T-cell (primary cell): ENCODE measurements at regions of chr5 and their contacts with region 1.

Region 1: DNA sequence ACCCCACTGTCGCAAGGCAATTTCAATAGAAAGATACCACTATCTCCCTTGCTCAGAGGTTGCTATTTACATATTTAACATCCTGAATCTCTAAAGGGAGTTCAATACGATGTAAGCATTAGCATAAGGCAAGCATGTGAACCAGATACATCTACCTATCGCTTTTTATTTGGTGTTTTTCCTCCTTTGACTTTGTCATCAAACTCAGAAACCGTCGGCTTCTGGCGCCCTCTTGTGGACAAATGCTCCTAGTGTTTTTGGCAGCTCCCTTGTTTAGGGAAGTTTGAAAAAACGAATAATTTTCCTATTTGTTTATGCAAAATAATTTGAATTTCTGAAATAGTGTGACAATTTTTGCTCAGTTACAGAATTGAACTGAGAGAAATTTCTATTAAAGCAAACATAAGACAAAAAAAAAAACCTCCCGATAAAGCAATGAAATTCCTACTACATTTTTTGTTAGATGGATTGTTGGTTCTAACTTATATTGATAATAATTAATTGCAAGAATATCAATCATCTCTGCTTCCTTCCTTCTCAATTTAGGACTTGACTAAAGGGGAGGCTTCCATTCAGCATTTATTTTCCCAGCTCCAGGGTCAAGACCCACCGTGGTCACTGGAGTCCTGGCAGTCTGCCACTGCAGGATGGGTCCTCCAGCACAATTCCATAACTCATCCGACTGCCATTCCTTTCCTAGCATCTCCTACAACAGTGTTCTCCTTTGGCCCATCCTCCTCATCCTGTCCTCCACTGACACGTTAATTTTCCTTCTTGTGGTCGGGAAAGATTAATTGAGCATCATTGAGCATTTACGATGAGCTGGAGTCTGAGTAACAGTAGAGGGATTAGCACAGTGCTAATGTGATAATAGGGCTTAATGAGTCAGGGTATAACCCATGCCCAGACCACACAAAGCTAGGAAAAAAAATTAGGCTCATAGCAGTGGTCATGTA is 131.8 kb upstream of the CHD1 start:
- DNase-seq: peak; percentile 64 to 91 (median 82)
- ATAC-seq: peak; percentile 53 to 80 (median 76)
- H3K4me3 ChIP-seq: no peak overlapping the region
- H3K4me3 Mint-ChIP-seq: no peak overlapping the region
- H3K27ac ChIP-seq: no peak overlapping the region
- H3K27ac Mint-ChIP-seq: no peak overlapping the region
- H3K4me1 ChIP-seq: peaks cover 0 to 2% of the 10 kb centered on the region in 2 experiments
- H3K4me1 Mint-ChIP-seq: peaks cover 0 to 20% (median 5%) of the 10 kb centered on the region in 3 donors
- H3K27me3 ChIP-seq: peaks cover 0 to 2% of the 10 kb centered on the region in 2 experiments
- H3K27me3 Mint-ChIP-seq: peaks cover 0 to 3% of the 10 kb centered on the region in 2 donors

Region 2: GRCh38 chr5:98905857-98906690 is 154.5 kb before region 1 on chr5:
- CTCF ChIA-PET with region 1: interaction called, 11 to 71 read pairs
- POLR2A ChIA-PET with region 1: interaction called, 3 to 4 read pairs
- DNase-seq: peak in 1 of 35 experiments; percentile 73
- ATAC-seq: peak in 3 of 4 experiments; percentile 35 to 50 (median 46)
- H3K4me3 ChIP-seq: no peak overlapping the region
- H3K4me3 Mint-ChIP-seq: no peak overlapping the region
- H3K27ac ChIP-seq: no peak overlapping the region
- H3K27ac Mint-ChIP-seq: peak overlapping the region; percentile 68 to 86
- H3K4me1 ChIP-seq: peaks cover 3 to 15% of the 10 kb centered on the region in 2 experiments
- H3K4me1 Mint-ChIP-seq: peaks cover 55 to 64% (median 59%) of the 10 kb centered on the region in 3 donors
- H3K27me3 ChIP-seq: no peaks in the 10 kb centered on the region
- H3K27me3 Mint-ChIP-seq: no peaks in the 10 kb centered on the region

Region 3: DNA sequence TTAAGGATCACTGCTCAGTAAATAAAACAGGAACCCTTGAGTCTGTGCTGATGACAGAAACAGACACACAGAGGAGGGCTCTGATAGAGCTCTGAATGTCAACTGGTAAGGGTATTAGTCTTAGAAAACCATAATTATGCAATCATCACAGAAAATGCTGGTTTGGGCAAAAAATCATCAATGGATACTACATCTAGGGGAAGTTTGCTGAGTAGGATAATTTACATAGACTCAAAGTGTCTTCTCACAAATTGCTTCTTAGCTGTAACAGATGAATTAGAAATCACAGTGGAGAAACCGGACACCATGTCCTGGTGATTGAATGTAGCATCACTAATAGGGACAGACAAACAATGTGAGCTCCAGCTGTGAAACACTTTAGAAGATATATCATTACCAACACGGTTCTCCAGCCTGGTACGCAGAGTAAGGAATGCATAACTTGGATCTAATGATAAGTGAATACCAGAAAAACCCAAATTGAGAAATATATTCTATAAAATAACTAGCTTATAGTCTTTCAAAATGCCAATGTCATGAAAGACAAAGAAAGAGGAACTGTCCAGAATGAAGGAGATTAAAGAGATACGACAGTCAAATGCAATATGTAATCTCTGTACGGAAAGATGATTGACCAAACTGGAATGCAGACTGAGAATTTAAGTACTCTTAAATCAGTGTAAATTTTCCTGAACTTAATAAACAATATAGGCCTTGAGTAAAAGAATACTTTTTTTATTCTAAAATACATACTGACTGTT is 149.1 kb before region 1 on chr5:
- CTCF ChIA-PET with region 1: interaction called, 7 to 45 read pairs
- POLR2A ChIA-PET with region 1: interaction called, 3 to 4 read pairs
- DNase-seq: no peak
- ATAC-seq: peak in 1 of 4 experiments; percentile 23
- H3K4me3 ChIP-seq: no peak overlapping the region
- H3K4me3 Mint-ChIP-seq: no peak overlapping the region
- H3K27ac ChIP-seq: no peak overlapping the region
- H3K27ac Mint-ChIP-seq: peak overlapping the region; percentile 50 to 53
- H3K4me1 ChIP-seq: peaks cover 13 to 19% of the 10 kb centered on the region in 2 experiments
- H3K4me1 Mint-ChIP-seq: peaks cover 69 to 74% (median 70%) of the 10 kb centered on the region in 3 donors
- H3K27me3 ChIP-seq: no peaks in the 10 kb centered on the region
- H3K27me3 Mint-ChIP-seq: no peaks in the 10 kb centered on the region

Region 4: GRCh38 chr5:98928873-98929696 is 131.5 kb before region 1 on chr5 and contains the start of gene CHD1:
- CTCF ChIA-PET with region 1: interaction called, 4 to 13 read pairs
- POLR2A ChIA-PET with region 1: interaction called, 3 to 5 read pairs
- DNase-seq: peak; percentile 88 to 99 (median 97)
- ATAC-seq: peak; percentile 63 to 77 (median 74)
- H3K4me3 ChIP-seq: peak within 1 kb of the TSS; percentile 73 to 98
- H3K4me3 Mint-ChIP-seq: peak within 1 kb of the TSS; percentile 92 to 99 (median 97)
- H3K27ac ChIP-seq: peak within 1 kb of the TSS; percentile 100
- H3K27ac Mint-ChIP-seq: peak within 1 kb of the TSS; percentile 99 to 100
- H3K4me1 ChIP-seq: peaks cover 18 to 41% of the 10 kb centered on the region in 2 experiments
- H3K4me1 Mint-ChIP-seq: peaks cover 68 to 76% (median 71%) of the 10 kb centered on the region in 3 donors
- H3K27me3 ChIP-seq: no peaks in the 10 kb centered on the region
- H3K27me3 Mint-ChIP-seq: no peaks in the 10 kb centered on the region
- total RNA-seq, gene CHD1: 61.5 to 150 (median 64.9) TPM

Region 5: GRCh38 chr5:99122976-99123375 is 62.4 kb after region 1 on chr5:
- CTCF ChIA-PET with region 1: no interaction called
- POLR2A ChIA-PET with region 1: no interaction called
- DNase-seq: no peak
- ATAC-seq: no peak
- H3K4me3 ChIP-seq: no peak overlapping the region
- H3K4me3 Mint-ChIP-seq: no peak overlapping the region
- H3K27ac ChIP-seq: no peak overlapping the region
- H3K27ac Mint-ChIP-seq: no peak overlapping the region
- H3K4me1 ChIP-seq: no peaks in the 10 kb centered on the region
- H3K4me1 Mint-ChIP-seq: no peaks in the 10 kb centered on the region
- H3K27me3 ChIP-seq: no peaks in the 10 kb centered on the region
- H3K27me3 Mint-ChIP-seq: peaks cover 3 to 5% of the 10 kb centered on the region in 2 donors

Region 6: GRCh38 chr5:99398976-99399375 is 338.4 kb after region 1 on chr5:
- CTCF ChIA-PET with region 1: no interaction called
- POLR2A ChIA-PET with region 1: no interaction called
- DNase-seq: no peak
- ATAC-seq: no peak
- H3K4me3 ChIP-seq: no peak overlapping the region
- H3K4me3 Mint-ChIP-seq: no peak overlapping the region
- H3K27ac ChIP-seq: no peak overlapping the region
- H3K27ac Mint-ChIP-seq: no peak overlapping the region
- H3K4me1 ChIP-seq: no peaks in the 10 kb centered on the region
- H3K4me1 Mint-ChIP-seq: no peaks in the 10 kb centered on the region
- H3K27me3 ChIP-seq: no peaks in the 10 kb centered on the region
- H3K27me3 Mint-ChIP-seq: no peaks in the 10 kb centered on the region